ENCODE measurements at regions of chr13 and their contacts with region 1.

Region 1: GRCh38 chr13:107373551-107373950 is 805.6 kb upstream of the ARGLU1 start:
- DNase-seq: no peak
- ATAC-seq: peak; percentile 70
- H3K4me3 ChIP-seq: no peak overlapping the region
- H3K27ac ChIP-seq: no peak overlapping the region
- H3K4me1 ChIP-seq: no peaks in the 10 kb centered on the region
- H3K27me3 ChIP-seq: no peaks in the 10 kb centered on the region

Region 2: GRCh38 chr13:107205303-107206104 is 168.0 kb before region 1 on chr13:
- intact Hi-C with region 1: loop called in 1 of 2 experiments (anchors 10 kb)
- DNase-seq: peak; percentile 67 to 89
- ATAC-seq: no peak
- H3K4me3 ChIP-seq: no peak overlapping the region
- H3K27ac ChIP-seq: no peak overlapping the region
- H3K4me1 ChIP-seq: no peaks in the 10 kb centered on the region
- H3K27me3 ChIP-seq: peaks cover 0 to 2% of the 10 kb centered on the region in 2 donors

Region 3: GRCh38 chr13:107441279-107441678 is 67.7 kb after region 1 on chr13:
- intact Hi-C with region 1: loop called in 1 of 2 experiments (anchors 10 kb)
- DNase-seq: no peak
- ATAC-seq: no peak
- H3K4me3 ChIP-seq: no peak overlapping the region
- H3K27ac ChIP-seq: no peak overlapping the region
- H3K4me1 ChIP-seq: peaks cover 0 to 1% of the 10 kb centered on the region in 2 donors
- H3K27me3 ChIP-seq: no peaks in the 10 kb centered on the region

Measured in aorta (tissue), 5 donors.